PC-9 (cell line): ENCODE measurements at regions of chr10 and their contacts with region 1.

Region 1: DNA sequence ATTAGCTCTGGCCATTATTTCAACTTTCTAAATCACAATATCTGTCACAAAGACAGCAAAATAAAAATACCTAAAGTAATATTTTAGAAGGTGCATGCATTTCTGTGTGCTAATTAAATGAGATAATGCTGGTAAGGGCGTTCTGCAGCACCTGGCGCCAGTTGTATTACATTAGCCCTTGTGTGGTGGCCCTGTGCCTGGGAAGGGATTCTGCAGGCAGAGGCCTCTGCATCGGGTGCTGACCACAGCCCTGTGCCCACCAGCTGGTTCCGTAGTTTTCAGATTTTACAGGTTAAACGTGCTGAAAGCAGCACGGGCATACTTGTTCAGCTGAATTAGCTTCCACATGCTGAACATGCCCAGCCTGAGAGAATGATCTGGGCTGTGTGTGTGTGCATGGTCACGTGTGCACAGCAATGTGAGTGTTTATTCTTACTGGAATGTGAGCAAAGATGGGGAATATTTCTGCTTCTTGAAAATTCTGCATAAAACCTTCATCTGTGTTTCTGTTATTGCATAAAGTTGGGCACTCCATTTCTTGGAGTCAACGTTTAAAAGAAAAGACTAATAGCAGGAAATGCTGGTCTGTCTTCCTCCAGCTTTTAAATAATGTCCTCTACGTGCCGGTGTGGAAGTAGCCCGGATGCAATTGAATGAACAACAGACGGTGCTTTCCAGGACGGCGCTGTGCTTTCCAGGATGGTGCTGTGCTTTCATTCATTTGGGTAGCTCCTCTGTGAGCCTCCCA is 157.9 kb upstream of the PRKCQ start:
- DNase-seq: peak; percentile 26 to 66
- H3K4me3 ChIP-seq: peak overlapping the region; percentile 65
- H3K27ac ChIP-seq: peak overlapping the region; percentile 93
- H3K4me1 ChIP-seq: peaks cover 34% of the 10 kb centered on the region
- H3K27me3 ChIP-seq: no peaks in the 10 kb centered on the region
- CTCF ChIP-seq: no peak

Region 2: GRCh38 chr10:6507311-6507710 is 230.6 kb before region 1 on chr10:
- CTCF ChIA-PET with region 1: no interaction called
- POLR2A ChIA-PET with region 1: no interaction called
- intact Hi-C with region 1: no loop called
- DNase-seq: no peak
- H3K4me3 ChIP-seq: no peak overlapping the region
- H3K27ac ChIP-seq: no peak overlapping the region
- H3K4me1 ChIP-seq: no peaks in the 10 kb centered on the region
- H3K27me3 ChIP-seq: no peaks in the 10 kb centered on the region
- CTCF ChIP-seq: no peak

Region 3: GRCh38 chr10:6678211-6678803 is 59.6 kb before region 1 on chr10:
- CTCF ChIA-PET with region 1: no interaction called
- POLR2A ChIA-PET with region 1: no interaction called
- intact Hi-C with region 1: loop called (anchors 5 kb)
- DNase-seq: peak in 1 of 2 experiments; percentile 35
- H3K4me3 ChIP-seq: no peak overlapping the region
- H3K27ac ChIP-seq: no peak overlapping the region
- H3K4me1 ChIP-seq: no peaks in the 10 kb centered on the region
- H3K27me3 ChIP-seq: 0 out of 2 replicates have a peak, but pooled peaks cover 2% of the 10 kb centered on the region
- CTCF ChIP-seq: peak; percentile 69

Region 4: DNA sequence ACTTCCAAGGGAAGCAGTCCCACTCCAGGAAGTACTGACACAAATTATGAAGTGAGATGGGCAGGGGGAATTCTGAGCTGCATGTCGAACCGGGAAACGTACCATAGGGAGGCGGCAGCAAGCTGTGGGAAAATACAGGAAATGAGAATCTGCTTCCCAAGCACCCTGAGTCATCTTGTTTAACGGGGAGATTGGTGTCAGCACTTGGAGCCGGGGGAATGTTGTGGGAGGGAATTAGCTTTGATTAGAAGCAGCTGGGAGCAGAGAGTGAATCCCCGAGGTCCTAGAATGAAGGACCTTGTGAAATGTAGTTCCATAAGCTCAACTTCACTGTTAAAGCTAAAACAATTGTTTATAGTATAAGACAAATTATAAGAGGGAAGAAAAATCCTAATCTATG is 16.5 kb before region 1 on chr10:
- CTCF ChIA-PET with region 1: no interaction called
- POLR2A ChIA-PET with region 1: interaction called, 22 read pairs
- intact Hi-C with region 1: loop called (anchors 1 kb)
- DNase-seq: peak; percentile 50 to 66
- H3K4me3 ChIP-seq: no peak overlapping the region; the same call in 1 of the 2 replicates
- H3K27ac ChIP-seq: peak overlapping the region; percentile 97
- H3K4me1 ChIP-seq: peaks cover 21% of the 10 kb centered on the region
- H3K27me3 ChIP-seq: no peaks in the 10 kb centered on the region
- CTCF ChIP-seq: peak; percentile 30; the same call in 1 of the 2 replicates

Region 5: GRCh38 chr10:6748978-6749635 is 11.2 kb after region 1 on chr10:
- CTCF ChIA-PET with region 1: no interaction called
- POLR2A ChIA-PET with region 1: interaction called, 60 read pairs
- intact Hi-C with region 1: loop called (anchors 1 kb)
- DNase-seq: peak; percentile 52 to 91
- H3K4me3 ChIP-seq: no peak overlapping the region
- H3K27ac ChIP-seq: peak overlapping the region; percentile 86
- H3K4me1 ChIP-seq: peaks cover 34% of the 10 kb centered on the region
- H3K27me3 ChIP-seq: no peaks in the 10 kb centered on the region
- CTCF ChIP-seq: no peak

Region 6: GRCh38 chr10:6778992-6779701 is 41.2 kb after region 1 on chr10:
- CTCF ChIA-PET with region 1: no interaction called
- POLR2A ChIA-PET with region 1: interaction called, 4 read pairs
- intact Hi-C with region 1: loop called (anchors 2 kb)
- DNase-seq: peak; percentile 85 to 94
- H3K4me3 ChIP-seq: no peak overlapping the region; the same call in 1 of the 2 replicates
- H3K27ac ChIP-seq: peak overlapping the region; percentile 72
- H3K4me1 ChIP-seq: peaks cover 10% of the 10 kb centered on the region
- H3K27me3 ChIP-seq: no peaks in the 10 kb centered on the region
- CTCF ChIP-seq: no peak

Region 7: GRCh38 chr10:6864142-6864541 is 126.2 kb after region 1 on chr10:
- CTCF ChIA-PET with region 1: no interaction called
- POLR2A ChIA-PET with region 1: interaction called, 15 read pairs
- intact Hi-C with region 1: no loop called
- DNase-seq: no peak
- H3K4me3 ChIP-seq: no peak overlapping the region
- H3K27ac ChIP-seq: no peak overlapping the region
- H3K4me1 ChIP-seq: no peaks in the 10 kb centered on the region
- H3K27me3 ChIP-seq: no peaks in the 10 kb centered on the region
- CTCF ChIP-seq: no peak

Region 8: GRCh38 chr10:7075110-7075509 is 337.2 kb after region 1 on chr10:
- CTCF ChIA-PET with region 1: no interaction called
- POLR2A ChIA-PET with region 1: no interaction called
- intact Hi-C with region 1: no loop called
- DNase-seq: no peak
- H3K4me3 ChIP-seq: no peak overlapping the region
- H3K27ac ChIP-seq: no peak overlapping the region
- H3K4me1 ChIP-seq: no peaks in the 10 kb centered on the region
- H3K27me3 ChIP-seq: peaks cover 17% of the 10 kb centered on the region; the same call in 1 of the 2 replicates
- CTCF ChIP-seq: no peak